ENCODE measurements at regions of chr9 and their contacts with region 1.

Region 1: GRCh38 chr9:133396952-133397351 is 20.8 kb downstream of the STKLD1 start:
- DNase-seq: no peak
- H3K4me3 ChIP-seq: no peak overlapping the region
- H3K27ac ChIP-seq: no peak overlapping the region
- H3K4me1 ChIP-seq: no peaks in the 10 kb centered on the region
- H3K27me3 ChIP-seq: peaks cover 0 to 17% of the 10 kb centered on the region in 2 donors
- CTCF ChIP-seq: no peak
- POLR2A ChIP-seq: no peak

Region 2: DNA sequence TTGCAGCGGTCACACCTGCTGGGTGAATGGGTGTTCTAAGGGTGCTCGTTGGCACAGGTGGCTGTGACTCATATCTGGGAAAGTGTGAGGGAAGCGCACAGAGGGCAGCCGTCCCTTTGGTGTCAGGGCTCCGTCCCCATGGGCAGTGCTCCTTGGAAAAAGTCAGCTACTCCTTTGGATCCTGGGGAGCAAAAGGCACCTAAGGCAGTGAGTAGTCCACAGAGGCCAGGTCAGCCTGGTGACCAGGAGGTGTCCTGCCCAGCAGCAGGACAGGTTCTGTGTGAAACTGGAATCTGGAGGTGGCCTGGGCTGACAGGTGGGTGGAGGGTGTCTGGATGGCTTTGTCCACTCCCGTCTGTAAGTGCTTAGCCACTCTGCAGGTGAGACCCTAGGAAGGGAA is 214.7 kb before region 1 on chr9:
- intact Hi-C with region 1: no loop called
- DNase-seq: no peak
- H3K4me3 ChIP-seq: no peak overlapping the region
- H3K27ac ChIP-seq: no peak overlapping the region
- H3K4me1 ChIP-seq: no peaks in the 10 kb centered on the region
- H3K27me3 ChIP-seq: no peaks in the 10 kb centered on the region
- CTCF ChIP-seq: no peak
- POLR2A ChIP-seq: no peak

Region 3: GRCh38 chr9:133377721-133378216 is 19.2 kb before region 1 on chr9:
- intact Hi-C with region 1: no loop called
- DNase-seq: no peak
- H3K4me3 ChIP-seq: no peak overlapping the region
- H3K27ac ChIP-seq: peak overlapping the region; percentile 10 to 70
- H3K4me1 ChIP-seq: no peaks in the 10 kb centered on the region
- H3K27me3 ChIP-seq: no peaks in the 10 kb centered on the region
- CTCF ChIP-seq: no peak
- POLR2A ChIP-seq: no peak

Region 4: GRCh38 chr9:133421615-133422542 is 24.9 kb after region 1 on chr9 and contains the start of gene ADAMTS13:
- intact Hi-C with region 1: no loop called
- DNase-seq: no peak
- H3K4me3 ChIP-seq: no peak within 1 kb of the TSS
- H3K27ac ChIP-seq: no peak within 1 kb of the TSS
- H3K4me1 ChIP-seq: peaks cover 0 to 2% of the 10 kb centered on the region in 2 donors
- H3K27me3 ChIP-seq: no peaks in the 10 kb centered on the region
- CTCF ChIP-seq: no peak
- POLR2A ChIP-seq: no peak
- total RNA-seq, gene ADAMTS13: 0.88 to 2.9 (median 0.96) TPM

Region 5: DNA sequence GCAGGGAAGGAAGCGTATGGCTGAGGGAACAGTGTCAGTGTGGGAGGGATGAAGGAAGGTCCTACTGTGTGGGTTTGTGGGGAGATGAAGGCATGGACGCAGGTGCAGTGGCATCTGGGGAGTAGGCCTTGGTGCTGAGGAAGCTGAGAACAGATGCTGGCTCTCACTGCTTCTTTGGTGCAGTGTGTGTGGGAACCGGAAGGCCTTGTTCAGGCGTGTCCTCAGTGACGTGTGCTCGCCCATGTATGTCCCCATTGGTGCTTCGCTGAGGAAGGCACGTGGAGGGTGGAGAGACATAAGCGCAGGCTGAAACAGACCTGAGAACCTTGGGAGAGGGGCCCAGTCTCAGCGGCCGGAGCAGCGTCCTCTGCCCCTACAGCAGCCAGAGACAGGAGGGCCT is 43.9 kb after region 1 on chr9:
- intact Hi-C with region 1: no loop called
- DNase-seq: no peak
- H3K4me3 ChIP-seq: no peak overlapping the region
- H3K27ac ChIP-seq: no peak overlapping the region
- H3K4me1 ChIP-seq: no peaks in the 10 kb centered on the region
- H3K27me3 ChIP-seq: no peaks in the 10 kb centered on the region
- CTCF ChIP-seq: no peak
- POLR2A ChIP-seq: no peak

Region 6: GRCh38 chr9:133869674-133870405 is 472.9 kb after region 1 on chr9:
- intact Hi-C with region 1: loop called (anchors 10 kb)
- DNase-seq: no peak
- H3K4me3 ChIP-seq: no peak overlapping the region
- H3K27ac ChIP-seq: no peak overlapping the region
- H3K4me1 ChIP-seq: peaks cover 9 to 14% of the 10 kb centered on the region in 2 donors
- H3K27me3 ChIP-seq: no peaks in the 10 kb centered on the region
- CTCF ChIP-seq: no peak
- POLR2A ChIP-seq: no peak